Astrocyte of the cerebellum (primary cell): ENCODE measurements at regions of chr1 and their contacts with region 1.

Region 1: GRCh38 chr1:205477759-205478247 is 22.0 kb upstream of the BLACAT1 start:
- DNase-seq: peak; percentile 48
- H3K4me3 ChIP-seq: no peak overlapping the region
- CTCF ChIP-seq: no peak

Region 2: GRCh38 chr1:205374228-205375078 is 103.3 kb before region 1 on chr1:
- in situ Hi-C with region 1: loop called (anchors 5 kb)
- DNase-seq: peak; percentile 46
- H3K4me3 ChIP-seq: no peak overlapping the region
- CTCF ChIP-seq: no peak